ENCODE measurements at regions of chr12 and their contacts with region 1.

Region 1: DNA sequence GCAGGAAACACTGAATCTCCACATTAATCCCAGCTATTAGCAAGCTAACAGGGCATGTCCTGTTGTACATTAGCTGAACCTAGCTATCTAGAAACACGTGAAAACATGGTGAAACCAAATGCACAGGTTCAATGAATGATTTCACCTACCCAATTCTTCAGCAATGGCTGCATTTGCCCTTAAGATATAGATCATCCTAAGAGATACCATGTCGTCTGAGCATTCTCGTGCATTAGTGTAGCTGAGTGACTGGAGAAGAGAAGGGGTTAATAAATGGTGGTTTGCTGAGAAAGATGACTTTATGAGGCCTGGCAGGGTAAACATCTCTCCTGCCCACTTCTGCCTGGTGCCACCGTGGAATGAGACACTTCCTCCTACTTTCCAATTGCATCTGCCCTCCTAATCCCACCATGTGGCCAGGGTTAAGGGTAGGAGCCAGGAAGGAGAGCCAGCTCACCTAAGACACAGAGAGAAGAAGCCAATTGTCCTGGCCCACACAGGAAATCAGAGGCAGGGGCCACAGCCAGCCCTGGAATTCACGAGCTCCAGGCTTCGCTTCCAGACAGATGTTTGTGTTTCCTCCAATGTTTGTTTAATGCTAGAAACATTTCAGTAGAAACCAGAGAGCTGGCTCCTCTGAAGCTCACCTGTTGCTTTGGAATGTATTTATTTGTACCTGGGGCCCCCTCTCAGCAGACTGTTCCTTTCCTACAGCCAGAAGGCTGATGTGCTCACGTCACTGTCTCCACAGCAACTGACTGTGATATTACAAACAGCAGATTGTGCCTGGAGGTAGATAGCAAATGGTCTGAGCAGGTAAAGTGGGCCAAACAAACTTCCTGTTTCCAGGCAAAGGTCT is 126.0 kb upstream of the PARP11 start:
- DNase-seq: peak in 3 of 5 donors; percentile 76 to 84 (median 77)
- H3K4me3 ChIP-seq: no peak overlapping the region
- H3K27ac ChIP-seq: peak overlapping the region; percentile 38 to 52
- H3K4me1 ChIP-seq: peaks cover 0 to 7% (median 0%) of the 10 kb centered on the region in 3 donors
- H3K27me3 ChIP-seq: no peaks in the 10 kb centered on the region
- CTCF ChIP-seq: no peak

Region 2: DNA sequence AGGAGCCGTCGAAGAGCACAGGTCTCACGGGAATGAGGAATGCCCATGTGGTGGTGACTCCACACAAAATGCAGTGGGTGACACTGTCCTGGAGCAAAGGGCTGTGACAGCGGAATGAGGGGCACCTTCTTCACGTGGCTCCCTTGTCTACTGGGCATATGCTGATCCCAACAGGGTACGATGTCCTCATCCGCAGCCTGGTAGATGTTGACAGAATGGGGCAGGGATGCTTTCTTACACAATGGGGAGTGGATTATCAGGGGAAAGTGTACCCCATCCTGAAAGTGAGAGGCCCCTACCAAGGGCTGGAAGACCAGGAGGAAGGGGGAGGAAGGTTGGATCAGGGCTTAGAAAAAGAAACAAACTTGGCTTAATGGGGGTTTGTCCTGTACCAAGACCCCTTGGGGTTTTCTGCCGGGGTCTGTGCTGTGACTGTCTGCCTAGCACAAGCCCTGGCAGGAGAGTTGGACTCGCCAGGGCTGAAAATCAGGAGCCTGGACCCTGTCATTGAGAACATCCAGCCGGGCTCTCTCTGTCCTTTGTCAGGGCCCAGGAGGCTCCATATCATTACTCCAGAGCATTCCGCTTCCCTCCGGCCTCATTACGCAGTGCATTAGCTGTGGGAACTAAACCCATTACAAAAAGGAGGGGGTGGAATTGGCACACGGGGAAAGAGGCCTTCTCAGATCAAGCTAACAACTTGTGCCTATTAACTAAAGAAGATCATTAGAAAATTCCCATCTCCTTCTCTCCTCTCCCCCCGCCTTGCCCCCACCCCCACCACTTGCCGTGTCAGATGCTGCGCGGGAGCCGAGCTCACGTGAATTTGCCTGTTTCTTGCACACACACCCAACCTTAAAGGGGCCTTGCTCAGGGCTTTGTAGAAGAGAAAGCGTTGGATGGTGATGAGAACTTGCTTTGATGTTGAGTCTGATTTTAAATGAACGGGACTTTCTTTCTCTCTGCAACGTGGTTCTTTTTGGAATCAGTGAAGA is 45.8 kb after region 1 on chr12:
- intact Hi-C with region 1: loop called (anchors 10 kb)
- DNase-seq: no peak
- H3K4me3 ChIP-seq: no peak overlapping the region
- H3K27ac ChIP-seq: no peak overlapping the region
- H3K4me1 ChIP-seq: no peaks in the 10 kb centered on the region
- H3K27me3 ChIP-seq: no peaks in the 10 kb centered on the region
- CTCF ChIP-seq: no peak

Region 3: GRCh38 chr12:4287325-4288211 is 288.4 kb after region 1 on chr12:
- intact Hi-C with region 1: loop called (anchors 10 kb)
- DNase-seq: peak in 2 of 5 donors; percentile 18 to 37
- H3K4me3 ChIP-seq: no peak overlapping the region
- H3K27ac ChIP-seq: no peak overlapping the region
- H3K4me1 ChIP-seq: no peaks in the 10 kb centered on the region
- H3K27me3 ChIP-seq: no peaks in the 10 kb centered on the region
- CTCF ChIP-seq: no peak

Measured in kidney (tissue), 22 donors.